ENCODE measurements at regions of chr4 and their contacts with region 1.

Region 1: DNA sequence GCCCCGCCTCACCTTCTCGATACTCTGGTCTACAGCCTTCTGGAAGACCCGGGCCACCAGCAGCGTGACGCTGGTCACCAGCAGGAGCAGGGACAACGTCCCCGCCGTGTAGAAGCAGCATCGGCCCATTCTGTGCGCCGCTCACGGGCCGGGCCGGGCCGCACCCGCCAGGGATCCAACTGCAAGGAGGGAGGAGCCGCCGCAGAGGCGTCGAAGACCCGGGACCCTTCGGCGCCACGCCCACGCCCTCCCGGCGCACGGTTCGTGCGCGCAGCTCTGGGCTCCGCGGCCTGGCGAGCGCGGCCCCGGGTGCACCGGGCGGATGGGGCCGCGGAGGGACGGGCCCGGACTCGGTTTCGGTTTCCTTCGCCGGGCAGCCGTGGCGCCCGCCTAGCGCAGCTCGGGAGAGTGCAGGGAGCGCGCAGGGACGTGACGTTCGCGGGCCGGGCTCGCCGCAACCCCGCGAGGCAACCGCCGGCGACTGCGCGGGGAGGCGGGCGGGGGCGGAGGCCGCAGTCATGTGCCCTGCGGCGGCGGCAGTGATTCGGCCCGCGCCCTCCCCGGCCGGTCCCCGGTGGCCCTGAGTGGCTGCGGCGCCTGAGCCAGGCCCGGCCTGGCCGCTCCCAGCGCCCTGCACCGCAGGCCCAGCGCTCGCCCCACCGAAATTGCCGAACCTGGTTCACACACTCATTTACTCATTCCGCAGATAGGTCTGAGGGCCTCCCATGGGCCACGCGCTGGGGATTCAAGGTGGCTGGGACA is at the start of gene SCARB2:
- DNase-seq: peak; percentile 79 to 89 (median 82)
- H3K4me3 ChIP-seq: peak within 1 kb of the TSS; percentile 92 to 93 (median 92)
- H3K4me3 Mint-ChIP-seq: peak within 1 kb of the TSS; percentile 93 to 96
- H3K27ac ChIP-seq: peak within 1 kb of the TSS; percentile 91 to 98
- H3K27ac Mint-ChIP-seq: peak within 1 kb of the TSS; percentile 91 to 99 (median 97)
- H3K4me1 ChIP-seq: peaks cover 81 to 86% of the 10 kb centered on the region in 2 donors
- H3K4me1 Mint-ChIP-seq: peaks cover 89% of the 10 kb centered on the region
- H3K27me3 ChIP-seq: no peaks in the 10 kb centered on the region
- H3K27me3 Mint-ChIP-seq: peaks cover 0 to 3% (median 0%) of the 10 kb centered on the region in 3 donors
- CTCF ChIP-seq: no peak
- polyA plus RNA-seq, gene SCARB2: 36.8 to 73.0 (median 53.5) TPM

Region 2: GRCh38 chr4:75908555-75908954 is 305.0 kb before region 1 on chr4:
- intact Hi-C with region 1: loop called in 1 of 2 experiments (anchors 5 kb)
- DNase-seq: peak; percentile 16 to 32 (median 21)
- H3K4me3 ChIP-seq: peak overlapping the region in 1 of 3 experiments; percentile 34
- H3K4me3 Mint-ChIP-seq: peak overlapping the region in 1 of 2 donors; percentile 52
- H3K27ac ChIP-seq: peak overlapping the region; percentile 77 to 84
- H3K27ac Mint-ChIP-seq: peak overlapping the region; percentile 77 to 95 (median 88)
- H3K4me1 ChIP-seq: peaks cover 53 to 61% of the 10 kb centered on the region in 2 donors
- H3K4me1 Mint-ChIP-seq: peaks cover 41% of the 10 kb centered on the region
- H3K27me3 ChIP-seq: no peaks in the 10 kb centered on the region
- H3K27me3 Mint-ChIP-seq: peaks cover 0 to 1% (median 0%) of the 10 kb centered on the region in 3 donors
- CTCF ChIP-seq: no peak

Region 3: GRCh38 chr4:76179398-76180318 is 33.9 kb before region 1 on chr4:
- intact Hi-C with region 1: no loop called
- DNase-seq: peak; percentile 72 to 78 (median 77)
- H3K4me3 ChIP-seq: no peak overlapping the region
- H3K4me3 Mint-ChIP-seq: no peak overlapping the region
- H3K27ac ChIP-seq: no peak overlapping the region
- H3K27ac Mint-ChIP-seq: peak overlapping the region in 2 of 7 donors; percentile 35 to 36
- H3K4me1 ChIP-seq: no peaks in the 10 kb centered on the region
- H3K4me1 Mint-ChIP-seq: no peaks in the 10 kb centered on the region
- H3K27me3 ChIP-seq: no peaks in the 10 kb centered on the region
- H3K27me3 Mint-ChIP-seq: no peaks in the 10 kb centered on the region
- CTCF ChIP-seq: peak; percentile 89

Region 4: DNA sequence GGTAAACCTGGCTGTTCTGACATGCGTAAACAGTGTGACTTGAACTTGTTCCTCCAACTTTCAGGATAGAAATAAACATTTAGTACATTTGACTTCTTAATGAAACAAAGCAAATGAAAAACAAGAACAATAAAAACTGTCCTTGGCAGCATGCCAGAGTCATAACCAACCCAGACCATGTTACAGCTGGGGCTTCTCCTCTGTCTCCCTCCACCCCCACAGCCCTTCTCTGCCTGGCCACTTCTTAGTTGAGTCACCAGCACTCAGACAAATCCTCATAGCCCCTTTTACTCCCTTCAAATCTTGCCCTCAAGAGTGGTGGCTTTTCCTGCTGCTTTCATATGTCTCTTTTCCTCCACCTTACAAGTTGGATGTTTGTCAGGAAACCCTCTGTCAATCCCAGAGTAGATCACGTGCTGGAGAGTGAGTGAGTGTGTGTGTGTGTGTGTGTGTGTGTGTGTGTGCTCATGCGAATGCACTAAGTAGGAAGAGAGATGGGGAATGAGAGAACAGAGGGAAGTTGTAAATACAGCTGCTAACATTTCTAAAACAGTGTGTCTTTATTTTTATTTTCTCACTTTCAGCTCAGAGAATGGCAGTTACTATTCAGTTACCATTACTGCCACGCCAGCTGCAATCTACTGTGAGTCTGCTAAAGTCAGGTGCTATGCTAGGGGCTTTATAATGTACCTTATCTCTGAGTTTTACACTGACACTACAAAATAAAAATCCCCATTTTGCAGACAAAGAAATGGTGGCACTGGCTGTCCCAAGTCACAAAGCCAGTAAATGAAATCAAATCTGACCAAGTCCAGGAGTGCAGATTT is 15.0 kb before region 1 on chr4:
- intact Hi-C with region 1: loop called in 1 of 2 experiments (anchors 2 kb)
- DNase-seq: peak; percentile 70 to 87 (median 80)
- H3K4me3 ChIP-seq: peak overlapping the region in 1 of 3 experiments; percentile 21
- H3K4me3 Mint-ChIP-seq: peak overlapping the region; percentile 3 to 70
- H3K27ac ChIP-seq: peak overlapping the region; percentile 29 to 70
- H3K27ac Mint-ChIP-seq: peak overlapping the region; percentile 83 to 95 (median 90)
- H3K4me1 ChIP-seq: peaks cover 51 to 60% of the 10 kb centered on the region in 2 donors
- H3K4me1 Mint-ChIP-seq: peaks cover 71% of the 10 kb centered on the region
- H3K27me3 ChIP-seq: no peaks in the 10 kb centered on the region
- H3K27me3 Mint-ChIP-seq: no peaks in the 10 kb centered on the region
- CTCF ChIP-seq: no peak

Region 5: GRCh38 chr4:76305971-76306881 is 92.6 kb after region 1 on chr4 and contains the start of gene STBD1:
- intact Hi-C with region 1: loop called in 1 of 2 experiments (anchors 10 kb)
- DNase-seq: peak; percentile 44 to 55 (median 46)
- H3K4me3 ChIP-seq: peak within 1 kb of the TSS; percentile 55 to 93 (median 93)
- H3K4me3 Mint-ChIP-seq: peak within 1 kb of the TSS; percentile 95 to 97
- H3K27ac ChIP-seq: peak within 1 kb of the TSS in 1 of 2 donors; percentile 75
- H3K27ac Mint-ChIP-seq: peak within 1 kb of the TSS; percentile 37 to 84 (median 74)
- H3K4me1 ChIP-seq: peaks cover 47 to 56% of the 10 kb centered on the region in 2 donors
- H3K4me1 Mint-ChIP-seq: peaks cover 46% of the 10 kb centered on the region
- H3K27me3 ChIP-seq: no peaks in the 10 kb centered on the region
- H3K27me3 Mint-ChIP-seq: peaks cover 0 to 1% (median 0%) of the 10 kb centered on the region in 3 donors
- CTCF ChIP-seq: no peak
- polyA plus RNA-seq, gene STBD1: 0.53 to 1.5 (median 1.2) TPM